Breast epithelium (tissue), 4 donors: ENCODE measurements at regions of chr4 and their contacts with region 1.

Region 1: DNA sequence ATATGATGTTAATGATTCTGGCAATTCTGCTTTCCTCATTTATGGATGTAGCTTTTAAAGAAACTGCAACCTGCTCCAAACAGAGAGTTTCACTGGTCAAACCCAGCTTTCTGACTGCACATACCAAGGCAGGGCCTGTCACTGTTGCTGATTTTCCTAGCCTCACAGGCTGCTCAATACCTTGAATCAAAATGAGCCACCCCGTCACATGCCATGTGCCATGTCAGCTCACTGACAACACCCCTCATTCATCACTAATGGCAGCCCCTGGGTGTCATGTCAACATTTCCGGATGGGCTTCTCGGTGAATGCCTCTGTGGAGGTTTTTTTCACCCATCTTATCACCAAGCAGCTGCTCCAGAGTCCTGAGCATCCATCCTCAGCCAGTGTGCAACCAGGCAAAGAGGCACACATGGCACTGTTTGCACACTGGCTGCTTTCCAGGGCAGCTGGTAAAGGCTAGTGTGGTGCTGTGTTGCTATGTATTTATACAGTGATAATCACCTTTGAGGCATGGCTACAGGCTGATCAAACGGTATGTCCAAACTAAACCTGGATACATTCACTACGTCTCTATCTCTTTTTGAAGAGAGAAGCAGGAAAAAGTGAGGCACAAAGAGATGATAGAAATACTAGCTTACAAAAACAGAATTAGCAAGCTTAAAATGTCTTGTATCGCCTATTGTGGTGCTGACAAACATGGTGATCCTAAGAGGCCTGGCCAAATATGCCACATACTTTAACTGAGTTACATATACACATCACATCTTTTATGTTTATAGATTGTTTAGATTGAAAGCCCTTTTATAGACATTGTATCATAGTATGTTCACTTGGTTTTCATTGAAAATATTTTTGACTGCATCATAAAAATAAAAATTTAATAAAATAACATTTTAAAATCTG is 94.6 kb upstream of the INPP4B start:
- DNase-seq: no peak
- H3K4me3 ChIP-seq: no peak overlapping the region
- H3K27ac ChIP-seq: no peak overlapping the region
- H3K4me1 ChIP-seq: no peaks in the 10 kb centered on the region
- H3K27me3 ChIP-seq: no peaks in the 10 kb centered on the region
- CTCF ChIP-seq: no peak
- POLR2A ChIP-seq: no peak

Region 2: GRCh38 chr4:142913461-142914030 is 27.1 kb before region 1 on chr4:
- intact Hi-C with region 1: loop called (anchors 5 kb)
- DNase-seq: no peak
- H3K4me3 ChIP-seq: no peak overlapping the region
- H3K27ac ChIP-seq: no peak overlapping the region
- H3K4me1 ChIP-seq: no peaks in the 10 kb centered on the region
- H3K27me3 ChIP-seq: no peaks in the 10 kb centered on the region
- CTCF ChIP-seq: no peak
- POLR2A ChIP-seq: no peak

Region 3: GRCh38 chr4:142952821-142953580 is 12.3 kb after region 1 on chr4:
- intact Hi-C with region 1: no loop called
- DNase-seq: no peak
- H3K4me3 ChIP-seq: no peak overlapping the region
- H3K27ac ChIP-seq: no peak overlapping the region
- H3K4me1 ChIP-seq: no peaks in the 10 kb centered on the region
- H3K27me3 ChIP-seq: no peaks in the 10 kb centered on the region
- CTCF ChIP-seq: no peak
- POLR2A ChIP-seq: no peak